ENCODE measurements at regions of chr4 and their contacts with region 1.

Region 1: GRCh38 chr4:149183638-149184037 is 632.0 kb downstream of the IQCM start:
- DNase-seq: no peak

Region 2: GRCh38 chr4:148914301-148914700 is 269.3 kb before region 1 on chr4:
- intact Hi-C with region 1: no loop called
- DNase-seq: no peak

Region 3: DNA sequence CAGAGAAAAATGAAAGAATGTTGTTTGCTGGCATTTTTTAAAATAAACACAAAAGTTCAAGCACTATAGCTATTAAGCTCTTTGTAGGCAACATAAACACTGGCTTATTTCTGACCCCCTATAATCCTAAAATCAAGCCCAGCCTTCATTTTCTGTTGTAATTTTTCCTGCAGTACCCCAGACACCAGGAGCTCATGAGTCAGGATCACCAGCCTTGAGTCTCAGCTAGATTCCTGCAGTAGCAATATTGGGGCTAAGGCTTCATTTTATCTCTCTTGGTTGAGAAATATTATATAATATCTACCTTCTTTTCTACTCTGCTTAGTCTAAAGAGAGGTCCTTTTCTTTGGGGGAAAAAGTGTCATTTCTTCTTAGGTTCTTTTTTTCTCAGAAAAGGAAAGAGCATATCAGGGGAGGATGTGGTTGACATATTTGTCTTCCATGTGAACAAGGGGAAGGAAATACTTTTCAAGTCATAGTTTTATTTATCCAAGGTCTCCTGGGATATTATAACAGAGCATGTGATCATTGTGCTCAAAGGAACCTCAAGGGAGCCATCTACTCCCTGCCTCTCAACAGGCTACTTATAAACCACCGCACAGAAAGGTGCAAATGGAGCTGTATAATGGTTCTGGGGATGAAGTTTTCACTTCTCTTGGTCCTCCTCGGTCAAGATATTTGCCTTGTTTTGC is 63.2 kb before region 1 on chr4:
- intact Hi-C with region 1: loop called (anchors 5 kb)
- DNase-seq: no peak